SK-N-SH (cell line): ENCODE measurements at regions of chr7 and their contacts with region 1.

Region 1: DNA sequence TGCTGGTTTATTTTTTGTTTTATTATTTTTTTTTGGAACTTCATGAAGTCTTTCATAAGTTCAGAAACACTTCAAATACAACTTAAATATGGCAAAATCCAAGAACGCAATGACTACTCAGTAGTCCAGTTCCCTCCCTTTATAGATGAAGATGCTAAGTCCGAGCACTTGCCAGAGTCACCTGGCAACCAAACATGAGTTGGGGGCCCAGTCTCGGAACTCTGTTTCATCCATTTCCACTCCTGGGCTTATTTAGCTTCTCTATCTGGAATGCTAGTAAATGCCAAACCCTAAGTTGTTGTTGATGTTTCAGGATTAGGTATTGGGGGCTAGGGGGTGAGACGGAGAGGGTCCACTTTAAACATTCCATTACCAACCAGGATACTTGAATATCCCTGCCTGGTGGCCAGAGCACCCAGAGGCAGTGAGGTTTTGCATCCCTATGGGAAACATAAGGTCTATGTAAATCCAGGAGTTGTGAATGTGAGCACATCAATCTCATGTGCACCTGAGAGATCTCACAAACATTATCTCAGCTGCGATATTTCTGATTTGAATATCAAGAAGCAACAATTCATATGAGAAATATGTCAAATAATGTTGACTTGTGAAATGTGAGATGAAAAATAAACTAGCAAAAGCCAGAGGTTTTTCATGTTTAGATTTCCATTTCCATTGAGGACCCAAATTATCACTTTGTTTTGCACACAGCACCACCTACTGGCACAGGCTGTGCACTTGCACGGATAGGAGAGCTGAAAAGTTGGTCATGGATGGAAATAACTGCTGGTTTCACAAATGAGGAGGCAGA is 129.3 kb downstream of the PKD1L1 start:
- DNase-seq: peak; percentile 81
- H3K4me3 ChIP-seq: no peak overlapping the region
- H3K27ac ChIP-seq: peak overlapping the region; percentile 48 to 66; a peak in 3 of 4 replicates
- H3K4me1 ChIP-seq: peaks cover 7 to 14% of the 10 kb centered on the region in 2 experiments; a peak in 2 of 4 replicates
- H3K27me3 ChIP-seq: no peaks in the 10 kb centered on the region
- CTCF ChIP-seq: peak; percentile 100
- EP300 ChIP-seq: no peak
- RAD21 ChIP-seq: peak; percentile 99

Region 2: DNA sequence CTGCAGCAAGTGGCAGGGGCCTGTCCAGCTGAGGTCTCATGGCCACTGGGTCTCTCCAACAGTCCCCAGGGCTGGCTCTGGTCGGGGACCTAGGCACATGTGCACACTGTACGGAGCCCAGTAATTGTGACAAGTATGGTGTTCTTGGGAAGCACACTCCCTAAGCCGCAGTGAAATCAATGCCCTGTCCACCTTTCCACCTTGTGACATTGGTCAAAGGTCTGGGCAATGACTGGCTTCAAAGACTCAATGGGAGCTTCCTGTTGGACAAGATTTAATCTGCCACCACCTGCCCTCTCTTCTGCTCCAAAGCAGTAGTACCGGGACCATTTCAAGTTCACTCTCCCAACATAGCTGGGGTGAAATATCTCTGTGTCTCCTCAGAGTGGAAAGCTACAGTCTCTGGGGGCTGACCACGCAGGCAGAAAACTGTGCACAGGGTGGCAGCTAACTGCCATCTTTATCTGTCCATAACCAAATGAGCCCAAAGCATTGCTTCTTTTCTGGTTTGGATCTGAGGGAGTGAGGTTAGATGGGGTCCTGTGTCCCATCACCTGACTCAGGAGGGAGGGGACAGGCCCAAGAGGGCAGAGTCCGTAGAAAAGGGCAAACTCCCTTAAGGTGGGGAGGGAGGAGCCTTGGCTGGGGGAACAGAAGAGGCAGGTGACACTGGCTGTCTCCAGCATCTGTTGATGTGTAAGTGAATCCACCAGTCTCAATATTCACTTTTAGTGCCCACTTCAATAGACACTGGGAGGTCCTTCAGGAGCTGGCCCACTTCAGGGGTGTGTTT is 544.8 kb before region 1 on chr7:
- CTCF ChIA-PET with region 1: interaction called, 275 read pairs
- POLR2A ChIA-PET with region 1: no interaction called
- DNase-seq: no peak
- H3K4me3 ChIP-seq: no peak overlapping the region
- H3K27ac ChIP-seq: no peak overlapping the region
- H3K4me1 ChIP-seq: no peaks in the 10 kb centered on the region; a peak in 1 of 4 replicates
- H3K27me3 ChIP-seq: no peaks in the 10 kb centered on the region
- CTCF ChIP-seq: no peak
- EP300 ChIP-seq: no peak
- RAD21 ChIP-seq: no peak

Region 3: DNA sequence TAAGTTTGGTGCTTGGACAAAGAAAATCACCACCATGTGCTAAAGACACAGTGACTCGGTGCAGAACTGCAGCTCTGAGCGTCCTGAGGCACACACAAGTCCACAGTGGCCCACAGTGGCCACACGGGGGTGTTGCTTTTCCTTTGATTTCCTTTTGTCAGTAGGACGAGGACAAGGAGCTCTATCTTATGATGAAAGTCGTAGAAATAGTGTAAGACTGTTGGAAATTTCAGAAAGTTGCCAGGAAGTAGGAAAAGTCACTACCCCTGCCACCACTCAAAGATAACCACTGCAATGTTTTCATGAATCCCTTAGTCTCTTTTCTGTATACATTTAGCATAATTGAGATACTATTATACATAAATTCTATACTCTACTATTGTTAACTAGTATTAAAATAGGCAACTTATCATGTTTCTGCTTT is 383.1 kb before region 1 on chr7:
- CTCF ChIA-PET with region 1: interaction called, 49 read pairs
- POLR2A ChIA-PET with region 1: no interaction called
- DNase-seq: peak; percentile 79
- H3K4me3 ChIP-seq: no peak overlapping the region
- H3K27ac ChIP-seq: no peak overlapping the region
- H3K4me1 ChIP-seq: peaks cover 0 to 12% of the 10 kb centered on the region in 2 experiments; a peak in 2 of 4 replicates
- H3K27me3 ChIP-seq: no peaks in the 10 kb centered on the region
- CTCF ChIP-seq: peak; percentile 79
- EP300 ChIP-seq: no peak
- RAD21 ChIP-seq: peak; percentile 95

Region 4: DNA sequence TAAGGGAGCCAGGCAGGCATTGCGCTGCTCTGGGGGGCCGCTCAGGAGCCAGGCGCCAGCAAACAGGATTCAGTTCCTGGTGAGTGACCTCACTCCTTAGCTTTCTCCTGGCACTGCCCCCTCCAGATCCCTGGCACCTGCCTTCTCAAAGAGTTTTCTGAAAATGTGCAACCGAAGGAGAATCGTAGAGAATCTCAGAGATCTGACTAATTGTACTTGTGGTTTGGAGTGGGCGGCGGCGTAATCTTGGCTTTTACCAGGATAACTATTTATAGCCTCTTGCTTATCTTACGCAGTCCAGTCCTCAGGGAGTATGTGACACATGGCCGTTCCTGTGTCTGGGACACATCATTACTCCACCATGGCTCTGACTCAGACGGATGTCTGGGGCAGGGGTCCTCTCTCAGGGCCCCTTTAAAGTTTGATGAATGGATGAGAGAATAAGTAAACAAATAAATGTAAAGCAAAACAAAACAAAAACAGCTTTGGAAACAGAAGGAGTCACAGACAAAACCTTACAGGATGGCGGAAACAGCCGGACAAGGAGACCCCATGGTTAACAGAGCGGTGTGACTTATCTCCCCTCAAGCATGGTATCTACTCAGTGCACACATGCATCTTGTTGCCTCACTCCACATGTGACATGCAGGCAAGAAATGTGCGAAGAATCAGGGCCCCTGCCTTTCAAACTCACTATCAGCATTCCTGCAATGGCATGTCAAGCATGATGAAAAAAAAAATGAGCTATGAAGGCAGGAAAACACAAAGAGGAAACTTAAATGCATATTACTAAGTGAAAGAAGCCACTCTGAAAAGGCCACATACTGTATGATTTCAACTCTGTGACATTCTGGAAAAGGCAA is 336.8 kb before region 1 on chr7:
- CTCF ChIA-PET with region 1: interaction called, 49 read pairs
- POLR2A ChIA-PET with region 1: no interaction called
- DNase-seq: peak; percentile 81
- H3K4me3 ChIP-seq: 0 out of 4 replicates have a peak overlapping the region, but pooled peaks of 1 of the 2 experiments have one; percentile 9
- H3K27ac ChIP-seq: peak overlapping the region; percentile 67 to 92
- H3K4me1 ChIP-seq: peaks cover 29 to 53% of the 10 kb centered on the region in 2 experiments
- H3K27me3 ChIP-seq: no peaks in the 10 kb centered on the region
- CTCF ChIP-seq: no peak
- EP300 ChIP-seq: peak; percentile 63 to 89; a peak in 2 of 4 replicates
- RAD21 ChIP-seq: no peak

Region 5: GRCh38 chr7:47757921-47758411 is 61.0 kb before region 1 on chr7:
- CTCF ChIA-PET with region 1: interaction called, 10 read pairs
- POLR2A ChIA-PET with region 1: no interaction called
- DNase-seq: no peak
- H3K4me3 ChIP-seq: no peak overlapping the region
- H3K27ac ChIP-seq: peak overlapping the region; percentile 59 to 89
- H3K4me1 ChIP-seq: peaks cover 25 to 26% of the 10 kb centered on the region in 2 experiments
- H3K27me3 ChIP-seq: no peaks in the 10 kb centered on the region
- CTCF ChIP-seq: no peak
- EP300 ChIP-seq: no peak
- RAD21 ChIP-seq: no peak; the same call in 1 of the 2 replicates

Region 6: GRCh38 chr7:47833211-47833610 is 14.2 kb after region 1 on chr7:
- CTCF ChIA-PET with region 1: interaction called, 32 read pairs
- POLR2A ChIA-PET with region 1: no interaction called
- DNase-seq: no peak
- H3K4me3 ChIP-seq: no peak overlapping the region
- H3K27ac ChIP-seq: no peak overlapping the region
- H3K4me1 ChIP-seq: no peaks in the 10 kb centered on the region
- H3K27me3 ChIP-seq: no peaks in the 10 kb centered on the region
- CTCF ChIP-seq: no peak
- EP300 ChIP-seq: no peak
- RAD21 ChIP-seq: no peak